Tibial artery (tissue), 4 donors: ENCODE measurements at regions of chr11 and their contacts with region 1.

Region 1: GRCh38 chr11:47087801-47088200 is 88.9 kb downstream of the ARFGAP2 start:
- DNase-seq: no peak
- H3K4me3 ChIP-seq: no peak overlapping the region
- H3K27ac ChIP-seq: no peak overlapping the region
- H3K4me1 ChIP-seq: no peaks in the 10 kb centered on the region
- H3K27me3 ChIP-seq: no peaks in the 10 kb centered on the region
- CTCF ChIP-seq: no peak

Region 2: GRCh38 chr11:47067401-47067800 is 20.4 kb before region 1 on chr11:
- intact Hi-C with region 1: loop called (anchors 2 kb)
- DNase-seq: no peak
- H3K4me3 ChIP-seq: no peak overlapping the region
- H3K27ac ChIP-seq: no peak overlapping the region
- H3K4me1 ChIP-seq: no peaks in the 10 kb centered on the region
- H3K27me3 ChIP-seq: no peaks in the 10 kb centered on the region
- CTCF ChIP-seq: no peak